GM13976 (cell line): ENCODE measurements at regions of chr1 and their contacts with region 1.

Region 1: GRCh38 chr1:218330043-218330623 is 15.0 kb upstream of the TGFB2 start:
- DNase-seq: peak; percentile 58
- CTCF ChIP-seq: peak; percentile 22

Region 2: GRCh38 chr1:218377143-218377660 is 47.1 kb after region 1 on chr1:
- in situ Hi-C with region 1: no loop called
- DNase-seq: no peak
- CTCF ChIP-seq: no peak

Region 3: DNA sequence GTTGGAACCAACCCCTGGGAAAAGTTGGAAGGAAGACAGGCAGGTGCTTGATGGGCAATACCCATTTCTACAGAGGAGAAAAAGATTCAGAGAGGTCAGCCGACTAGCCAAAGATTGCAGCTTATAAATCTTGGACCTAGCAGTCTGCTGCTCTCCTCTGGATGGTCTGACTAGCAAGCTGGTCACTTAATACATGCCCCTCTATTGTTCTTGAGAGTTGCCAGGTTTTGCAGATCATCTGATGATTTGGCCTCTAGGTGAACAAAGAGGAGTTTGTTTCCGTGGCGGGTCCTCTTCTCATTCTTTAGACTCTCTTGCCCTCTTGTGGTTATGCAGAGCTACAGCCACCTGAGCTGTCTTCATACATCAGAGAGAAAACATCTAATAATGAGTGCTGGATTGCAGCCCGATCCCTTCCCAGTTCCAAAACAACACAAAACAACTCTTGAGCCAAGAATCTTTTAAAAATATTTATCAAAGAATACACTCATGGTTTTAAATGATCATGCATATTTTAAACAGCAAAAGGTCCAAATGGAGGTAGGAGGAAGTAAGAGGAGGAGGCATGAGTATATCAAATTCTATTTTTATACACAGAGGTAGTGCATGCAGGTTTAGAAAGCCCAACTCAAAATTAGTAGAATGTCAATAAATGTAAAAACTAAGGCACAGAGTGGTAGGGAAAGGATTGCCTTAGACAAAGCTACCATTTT is 1482.5 kb after region 1 on chr1:
- in situ Hi-C with region 1: loop called (anchors 10 kb)
- DNase-seq: peak; percentile 63
- CTCF ChIP-seq: peak; percentile 67